Activated CD4-positive, alpha-beta T cell treated with anti-CD3 and anti-CD28 coated beads for 36 hours (primary cell): ENCODE measurements at regions of chr11 and their contacts with region 1.

Region 1: GRCh38 chr11:6353367-6353987 is 33.2 kb upstream of the CAVIN3 start:
- DNase-seq: peak; percentile 71
- ATAC-seq: peak; percentile 45
- H3K4me3 Mint-ChIP-seq: no peak overlapping the region
- H3K27ac Mint-ChIP-seq: no peak overlapping the region
- H3K4me1 Mint-ChIP-seq: peaks cover 25% of the 10 kb centered on the region
- H3K27me3 Mint-ChIP-seq: peaks cover 3% of the 10 kb centered on the region

Region 2: GRCh38 chr11:5476184-5476819 is 877.2 kb before region 1 on chr11:
- CTCF ChIA-PET with region 1: interaction called, 3 read pairs
- POLR2A ChIA-PET with region 1: no interaction called
- intact Hi-C with region 1: loop called in 1 of 2 experiments (anchors 1 kb)
- DNase-seq: peak; percentile 59
- ATAC-seq: peak; percentile 53
- H3K4me3 Mint-ChIP-seq: no peak overlapping the region
- H3K27ac Mint-ChIP-seq: no peak overlapping the region
- H3K4me1 Mint-ChIP-seq: no peaks in the 10 kb centered on the region
- H3K27me3 Mint-ChIP-seq: peaks cover 16% of the 10 kb centered on the region

Region 3: DNA sequence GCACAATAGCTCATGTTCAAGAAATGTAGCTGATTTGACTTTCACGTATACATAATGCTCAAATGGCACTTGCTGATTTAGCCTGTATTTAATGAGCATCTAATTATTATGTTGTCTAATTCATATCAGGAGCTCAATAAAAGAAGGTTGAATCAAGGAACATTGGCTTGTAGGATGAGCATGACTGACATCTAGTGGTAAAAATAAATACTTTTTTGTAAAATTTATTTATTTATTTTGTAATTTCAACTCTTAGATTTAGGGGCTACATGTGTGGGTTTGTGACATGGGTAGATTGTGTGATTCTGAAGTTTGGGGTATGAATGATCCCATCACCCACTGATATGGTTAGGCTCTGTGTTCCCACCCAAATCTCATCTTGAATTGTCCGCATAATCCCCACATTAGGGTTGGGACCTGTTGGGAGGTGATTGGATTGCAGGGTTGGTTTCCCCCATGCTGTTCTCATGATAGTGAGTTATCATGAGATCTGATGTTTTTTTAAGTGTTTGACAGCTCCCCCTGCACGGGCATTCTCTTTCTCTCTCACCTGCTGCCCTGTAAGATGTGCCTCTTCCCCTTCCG is 462.2 kb before region 1 on chr11:
- CTCF ChIA-PET with region 1: interaction called, 4 read pairs
- POLR2A ChIA-PET with region 1: no interaction called
- intact Hi-C with region 1: loop called in 1 of 2 experiments (anchors 5 kb)
- DNase-seq: no peak
- ATAC-seq: no peak
- H3K4me3 Mint-ChIP-seq: no peak overlapping the region
- H3K27ac Mint-ChIP-seq: no peak overlapping the region
- H3K4me1 Mint-ChIP-seq: no peaks in the 10 kb centered on the region
- H3K27me3 Mint-ChIP-seq: peaks cover 5% of the 10 kb centered on the region

Region 4: DNA sequence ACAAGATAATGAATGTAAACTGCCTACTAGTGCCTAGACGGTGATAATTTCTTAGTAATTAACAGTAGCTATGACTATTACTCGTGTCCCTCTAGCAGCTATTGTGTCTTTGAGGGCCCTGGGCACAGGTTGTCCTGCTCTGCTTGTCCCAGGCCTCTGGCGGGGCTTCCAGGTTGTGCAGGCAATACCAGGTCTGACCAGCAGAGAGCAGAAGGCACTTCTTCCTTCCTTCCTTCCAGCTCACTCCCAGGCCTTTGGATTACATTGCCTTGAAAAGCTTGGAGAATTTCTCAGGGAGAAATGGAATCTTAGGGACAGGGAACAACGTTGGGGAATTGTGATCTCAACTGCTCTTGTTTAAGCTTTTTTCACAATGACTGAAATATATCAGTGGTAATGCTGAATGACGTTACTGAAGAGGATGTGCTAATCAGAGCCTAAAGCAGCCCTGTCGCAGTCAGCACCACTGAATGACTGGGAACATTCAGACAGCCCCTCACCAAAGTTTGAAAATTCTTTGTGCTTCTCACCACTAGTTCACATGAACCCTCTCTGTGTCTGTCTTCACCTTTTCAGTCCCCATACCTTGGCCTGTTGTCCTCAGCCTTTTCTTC is 102.2 kb before region 1 on chr11:
- CTCF ChIA-PET with region 1: interaction called, 78 read pairs
- POLR2A ChIA-PET with region 1: no interaction called
- intact Hi-C with region 1: loop called (anchors 1 kb)
- DNase-seq: peak; percentile 77
- ATAC-seq: peak; percentile 86
- H3K4me3 Mint-ChIP-seq: no peak overlapping the region
- H3K27ac Mint-ChIP-seq: no peak overlapping the region
- H3K4me1 Mint-ChIP-seq: no peaks in the 10 kb centered on the region
- H3K27me3 Mint-ChIP-seq: no peaks in the 10 kb centered on the region

Region 5: GRCh38 chr11:6298605-6299004 is 54.9 kb before region 1 on chr11:
- CTCF ChIA-PET with region 1: interaction called, 23 read pairs
- POLR2A ChIA-PET with region 1: no interaction called
- intact Hi-C with region 1: loop called (anchors 1 to 2 kb)
- DNase-seq: peak; percentile 59
- ATAC-seq: peak; percentile 77
- H3K4me3 Mint-ChIP-seq: no peak overlapping the region
- H3K27ac Mint-ChIP-seq: no peak overlapping the region
- H3K4me1 Mint-ChIP-seq: no peaks in the 10 kb centered on the region
- H3K27me3 Mint-ChIP-seq: peaks cover 9% of the 10 kb centered on the region

Region 6: DNA sequence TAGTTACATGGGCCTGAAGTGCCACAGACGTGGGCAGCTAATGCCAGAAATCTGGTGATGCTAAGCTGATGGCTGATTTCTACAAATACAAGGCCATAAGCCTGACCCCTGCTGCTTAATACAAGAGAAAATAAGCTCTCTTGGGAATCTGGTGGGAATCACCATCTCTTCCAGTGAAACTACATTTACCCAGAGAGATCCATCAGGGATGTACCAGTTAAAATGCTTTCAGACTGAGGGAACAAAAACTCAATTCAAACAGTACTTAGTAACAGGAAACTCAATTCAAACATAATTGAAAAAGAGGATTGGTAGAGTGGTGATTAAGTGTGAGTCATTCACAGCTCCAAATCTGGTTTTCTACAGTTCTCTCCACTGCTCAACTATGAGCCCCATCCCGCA is 31.5 kb before region 1 on chr11:
- CTCF ChIA-PET with region 1: interaction called, 15 read pairs
- POLR2A ChIA-PET with region 1: interaction called, 5 read pairs
- intact Hi-C with region 1: loop called (anchors 1 to 2 kb)
- DNase-seq: peak; percentile 24
- ATAC-seq: peak; percentile 55
- H3K4me3 Mint-ChIP-seq: peak overlapping the region; percentile 22
- H3K27ac Mint-ChIP-seq: peak overlapping the region; percentile 81
- H3K4me1 Mint-ChIP-seq: peaks cover 29% of the 10 kb centered on the region
- H3K27me3 Mint-ChIP-seq: peaks cover 40% of the 10 kb centered on the region

Region 7: GRCh38 chr11:6682591-6682935 is 329.1 kb after region 1 on chr11:
- CTCF ChIA-PET with region 1: no interaction called
- POLR2A ChIA-PET with region 1: no interaction called
- intact Hi-C with region 1: no loop called
- DNase-seq: no peak
- ATAC-seq: no peak
- H3K4me3 Mint-ChIP-seq: peak overlapping the region; percentile 97
- H3K27ac Mint-ChIP-seq: peak overlapping the region; percentile 100
- H3K4me1 Mint-ChIP-seq: peaks cover 24% of the 10 kb centered on the region
- H3K27me3 Mint-ChIP-seq: no peaks in the 10 kb centered on the region